ENCODE measurements at regions of chr9 and their contacts with region 1.

Region 1: GRCh38 chr9:83980395-83981125 is at the start of gene RMI1:
- DNase-seq: peak; percentile 99
- ATAC-seq: peak; percentile 79
- H3K4me3 ChIP-seq: peak within 1 kb of the TSS; percentile 96 to 100 (median 99)
- H3K4me3 Mint-ChIP-seq: peak within 1 kb of the TSS; percentile 92
- H3K27ac ChIP-seq: peak within 1 kb of the TSS; percentile 99
- H3K27ac Mint-ChIP-seq: peak within 1 kb of the TSS; percentile 100
- H3K4me1 ChIP-seq: peaks cover 18% of the 10 kb centered on the region in 2 donors
- H3K4me1 Mint-ChIP-seq: peaks cover 33% of the 10 kb centered on the region
- H3K27me3 ChIP-seq: no peaks in the 10 kb centered on the region
- H3K27me3 Mint-ChIP-seq: no peaks in the 10 kb centered on the region
- CTCF ChIP-seq: no peak
- total RNA-seq, gene RMI1: 8.6 and 8.9 TPM in 2 replicates

Region 2: GRCh38 chr9:83622939-83623678 is 357.5 kb before region 1 on chr9 and contains the start of gene IDNK:
- CTCF ChIA-PET with region 1: interaction called, 4 read pairs
- POLR2A ChIA-PET with region 1: no interaction called
- intact Hi-C with region 1: loop called (anchors 2 kb)
- DNase-seq: peak; percentile 85
- ATAC-seq: peak; percentile 88
- H3K4me3 ChIP-seq: peak within 1 kb of the TSS; percentile 47 to 87 (median 79)
- H3K4me3 Mint-ChIP-seq: peak within 1 kb of the TSS; percentile 94
- H3K27ac ChIP-seq: peak within 1 kb of the TSS; percentile 76 to 88
- H3K27ac Mint-ChIP-seq: peak within 1 kb of the TSS; percentile 98
- H3K4me1 ChIP-seq: peaks cover 9 to 21% of the 10 kb centered on the region in 2 donors
- H3K4me1 Mint-ChIP-seq: peaks cover 33% of the 10 kb centered on the region
- H3K27me3 ChIP-seq: no peaks in the 10 kb centered on the region
- H3K27me3 Mint-ChIP-seq: no peaks in the 10 kb centered on the region
- CTCF ChIP-seq: no peak
- total RNA-seq, gene IDNK: 11.2 and 11.6 TPM in 2 replicates

Region 3: DNA sequence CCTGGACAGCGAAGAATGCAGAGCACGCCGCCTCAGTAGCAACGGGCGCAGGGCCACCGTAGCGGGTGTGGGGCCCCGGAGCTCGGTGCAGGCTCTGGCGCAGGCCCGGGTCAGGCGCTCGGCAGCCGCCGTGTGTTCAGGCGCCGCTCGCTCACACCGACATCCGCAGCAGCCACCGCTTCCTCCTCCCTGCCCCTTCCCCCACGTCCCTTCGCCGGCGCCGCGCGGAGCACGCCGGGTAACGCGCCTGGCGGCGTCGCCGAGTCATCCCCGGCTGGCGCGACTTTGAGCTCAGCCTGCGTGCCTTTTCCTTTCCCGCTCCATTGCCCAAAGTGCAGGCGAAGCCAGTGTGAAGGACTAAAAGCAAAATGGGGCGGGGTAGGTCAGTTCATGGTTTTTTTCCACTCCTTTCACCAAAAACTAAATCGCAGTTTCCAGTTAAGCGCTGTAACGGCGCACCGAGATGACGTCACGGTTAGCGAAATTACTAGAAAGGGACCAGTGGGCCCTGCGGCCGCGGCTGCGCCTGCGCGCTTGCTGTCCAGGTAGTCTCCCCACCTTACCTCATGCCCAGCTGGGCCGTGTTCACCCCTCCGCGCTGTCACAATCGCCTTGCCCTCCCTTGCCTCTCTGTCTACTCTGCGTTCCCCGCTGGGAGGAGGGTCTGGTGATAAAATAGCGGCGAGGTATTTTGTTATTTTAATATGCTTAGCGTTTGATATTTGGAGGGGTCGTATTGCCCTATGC is 272.6 kb before region 1 on chr9 and contains the start of gene UBQLN1:
- CTCF ChIA-PET with region 1: no interaction called
- POLR2A ChIA-PET with region 1: interaction called, 17 read pairs
- intact Hi-C with region 1: loop called (anchors 1 kb)
- DNase-seq: peak; percentile 97
- ATAC-seq: peak; percentile 83
- H3K4me3 ChIP-seq: peak within 1 kb of the TSS; percentile 75 to 95 (median 87)
- H3K4me3 Mint-ChIP-seq: peak within 1 kb of the TSS; percentile 93
- H3K27ac ChIP-seq: peak within 1 kb of the TSS; percentile 95 to 96
- H3K27ac Mint-ChIP-seq: peak within 1 kb of the TSS; percentile 95
- H3K4me1 ChIP-seq: peaks cover 20% of the 10 kb centered on the region in 2 donors
- H3K4me1 Mint-ChIP-seq: peaks cover 46% of the 10 kb centered on the region
- H3K27me3 ChIP-seq: no peaks in the 10 kb centered on the region
- H3K27me3 Mint-ChIP-seq: no peaks in the 10 kb centered on the region
- CTCF ChIP-seq: no peak
- total RNA-seq, gene UBQLN1: 101 and 108 TPM in 2 replicates

Region 4: GRCh38 chr9:83920927-83921707 is 59.4 kb before region 1 on chr9 and contains the start of gene KIF27:
- CTCF ChIA-PET with region 1: interaction called, 3 read pairs
- POLR2A ChIA-PET with region 1: interaction called, 17 read pairs
- intact Hi-C with region 1: loop called (anchors 1 kb)
- DNase-seq: peak; percentile 95
- ATAC-seq: peak; percentile 89
- H3K4me3 ChIP-seq: peak within 1 kb of the TSS; percentile 61 to 74 (median 67)
- H3K4me3 Mint-ChIP-seq: peak within 1 kb of the TSS; percentile 91
- H3K27ac ChIP-seq: peak within 1 kb of the TSS; percentile 84 to 99
- H3K27ac Mint-ChIP-seq: peak within 1 kb of the TSS; percentile 95
- H3K4me1 ChIP-seq: peaks cover 10 to 17% of the 10 kb centered on the region in 2 donors
- H3K4me1 Mint-ChIP-seq: peaks cover 18% of the 10 kb centered on the region
- H3K27me3 ChIP-seq: no peaks in the 10 kb centered on the region
- H3K27me3 Mint-ChIP-seq: no peaks in the 10 kb centered on the region
- CTCF ChIP-seq: peak; percentile 71
- total RNA-seq, gene KIF27: 10.0 and 10.7 TPM in 2 replicates

Region 5: DNA sequence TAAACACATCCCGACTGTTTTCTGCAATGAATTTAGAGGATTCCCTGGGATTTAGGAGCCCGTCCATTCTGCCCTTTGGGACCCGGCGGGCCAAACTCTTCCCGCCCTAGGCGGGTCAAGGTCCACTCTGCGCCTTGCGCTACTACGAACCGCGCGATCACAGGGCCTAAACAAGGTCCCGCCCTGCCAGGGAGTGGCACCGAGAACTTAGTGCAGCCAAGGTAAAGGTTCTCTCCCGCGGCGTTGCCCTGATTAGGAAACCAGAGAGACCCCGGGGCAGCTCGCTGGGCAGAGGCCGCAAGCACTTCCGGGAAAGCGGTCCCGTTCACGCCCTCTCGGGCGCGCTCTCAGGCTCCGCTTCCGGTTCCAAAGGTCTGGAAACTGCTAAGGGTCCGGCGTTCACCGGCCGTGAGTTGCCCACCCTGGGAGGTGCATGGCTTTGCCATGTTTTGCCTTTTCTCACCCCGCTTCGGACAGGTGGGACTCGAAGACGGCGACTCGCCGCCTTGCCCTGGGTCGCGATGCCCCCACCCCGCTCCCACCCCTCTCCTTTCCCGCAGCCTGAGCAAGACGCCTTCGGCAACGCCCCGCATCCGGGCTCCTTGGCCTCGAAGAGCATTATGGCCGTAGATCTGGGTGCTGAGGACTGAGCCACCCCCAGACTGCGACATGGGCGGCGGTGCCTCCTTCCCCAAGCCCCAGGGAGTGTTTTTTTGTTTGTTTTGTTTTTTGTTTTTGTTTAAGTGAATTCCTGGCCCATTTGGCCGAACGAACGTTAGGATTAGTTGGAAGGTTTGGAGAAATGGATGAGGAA is 23.9 kb before region 1 on chr9:
- CTCF ChIA-PET with region 1: interaction called, 6 read pairs
- POLR2A ChIA-PET with region 1: interaction called, 20 read pairs
- intact Hi-C with region 1: loop called (anchors 1 kb)
- DNase-seq: peak; percentile 65
- ATAC-seq: peak; percentile 73
- H3K4me3 ChIP-seq: peak overlapping the region; percentile 81 to 96 (median 90)
- H3K4me3 Mint-ChIP-seq: peak overlapping the region; percentile 90
- H3K27ac ChIP-seq: peak overlapping the region; percentile 63 to 72
- H3K27ac Mint-ChIP-seq: peak overlapping the region; percentile 91
- H3K4me1 ChIP-seq: peaks cover 8 to 11% of the 10 kb centered on the region in 2 donors
- H3K4me1 Mint-ChIP-seq: peaks cover 18% of the 10 kb centered on the region
- H3K27me3 ChIP-seq: no peaks in the 10 kb centered on the region
- H3K27me3 Mint-ChIP-seq: no peaks in the 10 kb centered on the region
- CTCF ChIP-seq: no peak

Region 6: GRCh38 chr9:83965350-83966208 is 15.0 kb before region 1 on chr9:
- CTCF ChIA-PET with region 1: no interaction called
- POLR2A ChIA-PET with region 1: interaction called, 11 read pairs
- intact Hi-C with region 1: loop called (anchors 1 kb)
- DNase-seq: no peak
- ATAC-seq: no peak
- H3K4me3 ChIP-seq: no peak overlapping the region
- H3K4me3 Mint-ChIP-seq: no peak overlapping the region
- H3K27ac ChIP-seq: peak overlapping the region in 1 of 2 donors; percentile 42
- H3K27ac Mint-ChIP-seq: peak overlapping the region; percentile 5
- H3K4me1 ChIP-seq: no peaks in the 10 kb centered on the region
- H3K4me1 Mint-ChIP-seq: no peaks in the 10 kb centered on the region
- H3K27me3 ChIP-seq: no peaks in the 10 kb centered on the region
- H3K27me3 Mint-ChIP-seq: no peaks in the 10 kb centered on the region
- CTCF ChIP-seq: no peak

Region 7: DNA sequence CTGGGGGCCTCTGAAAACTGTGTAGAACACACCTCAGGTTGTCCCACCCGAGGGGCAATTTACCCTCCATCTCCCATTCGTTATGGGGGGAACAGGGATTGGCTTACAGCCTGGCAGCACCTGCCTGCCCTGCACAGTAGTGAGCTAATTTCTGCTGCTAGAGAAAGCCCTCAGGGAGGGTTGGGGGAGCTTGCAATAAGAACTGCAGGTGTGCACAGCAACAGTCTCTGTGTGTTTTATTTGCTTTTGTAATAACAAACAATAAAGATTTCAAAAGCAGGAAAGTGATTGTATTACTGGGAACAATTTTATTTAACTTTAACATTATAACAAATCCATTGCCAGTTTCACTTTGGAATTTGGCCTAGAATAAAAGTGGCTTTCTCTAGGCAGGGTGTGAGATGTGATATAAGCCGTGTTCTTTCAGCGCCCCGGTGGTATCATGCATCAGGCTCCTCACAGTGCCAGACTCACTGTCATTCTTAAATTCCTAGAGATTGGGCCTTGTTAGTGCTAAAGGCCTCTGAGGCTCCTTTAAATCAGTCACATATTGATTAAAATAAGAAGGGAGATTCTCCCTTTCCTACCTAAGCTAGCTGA is 81.1 kb after region 1 on chr9:
- CTCF ChIA-PET with region 1: no interaction called
- POLR2A ChIA-PET with region 1: no interaction called
- intact Hi-C with region 1: no loop called
- DNase-seq: no peak
- ATAC-seq: no peak
- H3K4me3 ChIP-seq: no peak overlapping the region
- H3K4me3 Mint-ChIP-seq: no peak overlapping the region
- H3K27ac ChIP-seq: no peak overlapping the region
- H3K27ac Mint-ChIP-seq: no peak overlapping the region
- H3K4me1 ChIP-seq: no peaks in the 10 kb centered on the region
- H3K4me1 Mint-ChIP-seq: no peaks in the 10 kb centered on the region
- H3K27me3 ChIP-seq: peaks cover 0 to 3% (median 0%) of the 10 kb centered on the region in 4 experiments
- H3K27me3 Mint-ChIP-seq: peaks cover 33% of the 10 kb centered on the region
- CTCF ChIP-seq: no peak

Region 8: DNA sequence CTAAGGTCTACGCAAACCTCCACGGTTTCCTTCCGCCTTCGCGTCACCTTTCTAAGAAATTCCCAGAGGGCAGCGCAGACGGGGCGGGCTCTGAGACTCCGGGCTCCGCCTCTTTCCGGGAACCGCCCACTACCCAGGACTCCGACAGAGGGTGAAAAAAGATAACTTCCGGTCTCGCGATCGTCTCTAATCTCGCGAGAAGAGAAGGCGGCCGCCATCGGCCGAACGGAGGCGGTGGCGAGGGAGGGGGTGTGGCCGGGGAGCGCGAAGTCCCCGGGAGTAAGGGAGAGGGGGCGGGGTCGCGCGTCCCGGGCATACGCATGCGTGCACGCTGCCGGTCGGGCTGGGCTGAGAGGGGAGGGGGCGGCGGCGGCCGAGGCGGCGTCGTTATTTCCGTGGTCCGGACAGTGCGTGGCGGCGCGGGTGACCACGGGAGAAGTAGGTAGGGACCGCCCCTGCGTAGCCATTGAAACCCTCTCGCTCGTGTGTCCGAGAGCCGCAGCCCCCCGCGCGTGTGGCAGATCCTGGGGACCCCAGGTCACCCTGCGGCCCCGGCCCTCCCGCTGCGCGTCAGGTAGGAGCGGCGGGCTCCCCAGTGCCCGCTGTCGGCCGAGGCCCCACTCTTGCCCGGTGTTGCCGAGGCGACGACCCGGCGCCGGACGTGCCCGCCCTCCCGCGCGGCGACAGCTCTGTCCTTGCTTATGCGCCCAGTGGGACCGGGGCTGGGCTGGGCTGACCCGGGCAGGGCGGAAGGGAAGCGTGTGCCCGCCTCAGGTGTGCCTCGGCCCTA is 1960.5 kb after region 1 on chr9 and contains the start of gene NAA35:
- CTCF ChIA-PET with region 1: no interaction called
- POLR2A ChIA-PET with region 1: no interaction called
- intact Hi-C with region 1: loop called (anchors 2 kb)
- DNase-seq: peak; percentile 100
- ATAC-seq: peak; percentile 85
- H3K4me3 ChIP-seq: peak within 1 kb of the TSS; percentile 59 to 94 (median 85)
- H3K4me3 Mint-ChIP-seq: peak within 1 kb of the TSS; percentile 92
- H3K27ac ChIP-seq: peak within 1 kb of the TSS; percentile 79 to 90
- H3K27ac Mint-ChIP-seq: peak within 1 kb of the TSS; percentile 93
- H3K4me1 ChIP-seq: peaks cover 22 to 26% of the 10 kb centered on the region in 2 donors
- H3K4me1 Mint-ChIP-seq: peaks cover 27% of the 10 kb centered on the region
- H3K27me3 ChIP-seq: peaks cover 0 to 7% (median 0%) of the 10 kb centered on the region in 4 experiments
- H3K27me3 Mint-ChIP-seq: peaks cover 10% of the 10 kb centered on the region
- CTCF ChIP-seq: no peak
- total RNA-seq, gene NAA35: 26.1 and 26.2 TPM in 2 replicates